ENCODE measurements at regions of chr15 and their contacts with region 1.

Region 1: DNA sequence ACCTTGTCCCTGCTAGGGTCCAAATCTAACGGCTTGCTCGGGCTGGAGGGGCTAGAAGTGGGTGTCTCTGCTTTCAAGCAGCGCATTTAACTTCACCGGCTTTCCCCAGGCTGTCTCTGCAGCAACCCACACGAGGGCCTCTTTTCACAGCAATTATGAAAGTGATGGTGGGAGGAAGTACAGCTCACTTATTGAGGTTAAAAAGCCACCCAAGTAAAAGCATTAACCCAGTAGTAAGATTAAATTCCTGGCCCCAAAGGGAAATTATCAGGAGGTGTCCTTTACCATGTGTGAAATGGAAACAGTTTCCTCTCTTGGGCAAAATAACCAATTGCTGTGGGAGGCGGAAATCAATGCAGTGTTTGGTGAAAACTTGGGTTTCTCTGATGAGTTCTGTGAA is 41.1 kb downstream of the NGRN start:
- DNase-seq: peak; percentile 44
- H3K4me3 Mint-ChIP-seq: peak overlapping the region; percentile 14
- H3K27ac Mint-ChIP-seq: peak overlapping the region; percentile 80
- H3K4me1 Mint-ChIP-seq: peaks cover 34% of the 10 kb centered on the region
- H3K27me3 Mint-ChIP-seq: peaks cover 3% of the 10 kb centered on the region

Region 2: DNA sequence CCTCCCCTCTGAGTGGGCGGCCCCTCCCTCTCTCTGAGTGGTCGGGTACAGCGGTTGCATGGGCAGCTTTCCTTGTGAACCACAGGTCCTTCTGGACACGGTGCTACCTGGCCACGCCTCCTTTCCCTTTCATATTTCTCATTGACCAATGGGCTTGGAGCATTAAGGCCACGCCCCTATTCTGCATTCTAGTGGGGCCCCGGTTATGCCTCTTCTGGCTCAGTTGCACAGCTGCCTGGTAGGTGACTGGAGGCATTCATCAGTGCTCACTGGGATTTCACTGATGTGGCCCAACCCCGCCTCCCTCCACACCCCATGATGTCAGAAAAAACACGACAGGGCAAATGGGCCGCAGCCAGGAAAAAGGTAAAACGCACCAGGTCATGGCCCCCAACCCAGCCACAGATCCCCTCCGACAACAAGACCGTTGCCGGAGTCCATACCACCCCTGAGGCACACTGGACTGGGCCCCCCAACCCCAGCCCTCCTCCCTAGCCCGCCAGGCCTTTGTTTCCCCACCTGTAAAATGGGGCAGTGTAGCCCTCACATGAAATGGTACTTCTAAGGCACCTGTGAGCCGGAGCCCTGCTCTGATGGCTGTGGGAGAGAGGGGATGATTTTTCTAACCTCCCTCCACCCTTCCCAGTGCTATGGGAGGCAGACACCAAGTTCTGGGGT is 14.7 kb before region 1 on chr15:
- CTCF ChIA-PET with region 1: interaction called, 23 read pairs
- POLR2A ChIA-PET with region 1: interaction called, 4 read pairs
- DNase-seq: peak; percentile 20
- H3K4me3 Mint-ChIP-seq: no peak overlapping the region
- H3K27ac Mint-ChIP-seq: no peak overlapping the region
- H3K4me1 Mint-ChIP-seq: peaks cover 11% of the 10 kb centered on the region
- H3K27me3 Mint-ChIP-seq: peaks cover 12% of the 10 kb centered on the region